ENCODE measurements at regions of chr7 and their contacts with region 1.

Region 1: DNA sequence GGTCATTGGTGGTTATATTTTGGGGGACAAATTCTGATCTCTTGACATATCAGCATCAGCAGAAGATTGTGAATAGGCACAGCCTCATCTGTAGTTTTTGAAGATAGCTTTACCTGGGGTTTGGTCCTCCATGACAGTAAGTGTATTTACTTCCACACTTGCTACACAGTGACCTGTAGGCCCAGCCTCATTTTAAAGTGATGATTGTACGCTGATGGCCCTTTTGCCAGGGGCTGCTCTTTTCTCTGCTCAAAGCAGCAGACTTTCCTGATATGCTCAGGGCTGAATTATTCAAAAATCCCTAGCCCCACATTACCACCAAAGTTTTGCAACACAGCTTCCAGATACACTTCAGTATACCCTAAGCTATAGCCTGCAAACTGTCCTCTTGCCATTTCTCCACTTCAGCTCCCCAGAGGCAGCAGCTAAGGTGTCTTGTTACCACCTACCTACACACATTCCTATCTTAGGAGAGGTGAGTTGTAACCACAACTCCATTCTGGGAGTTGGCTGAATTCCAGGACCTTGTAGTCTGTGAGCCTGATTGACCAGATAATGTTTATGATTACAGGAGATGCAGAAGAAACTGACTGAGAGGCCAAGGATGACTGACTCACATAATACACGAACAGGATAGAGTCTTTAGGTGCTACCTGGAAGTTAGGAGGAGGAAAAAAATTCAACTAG is 6.0 kb downstream of the ASB4 start:
- DNase-seq: peak; percentile 94
- ATAC-seq: peak; percentile 95
- H3K4me3 ChIP-seq: peak overlapping the region in 1 of 2 experiments; percentile 27; a peak in 3 of 4 replicates
- H3K27ac ChIP-seq: peak overlapping the region; percentile 15; the same call in 1 of the 2 replicates
- H3K4me1 ChIP-seq: peaks cover 20 to 30% of the 10 kb centered on the region in 2 experiments
- H3K27me3 ChIP-seq: no peaks in the 10 kb centered on the region
- CTCF ChIP-seq: no peak
- POLR2A ChIP-seq: no peak
- RAD21 ChIP-seq: no peak

Region 2: GRCh38 chr7:95476904-95477594 is 14.7 kb before region 1 on chr7:
- CTCF ChIA-PET with region 1: interaction called, 19 read pairs
- POLR2A ChIA-PET with region 1: no interaction called
- RAD21 ChIA-PET with region 1: no interaction called
- intact Hi-C with region 1: no loop called
- DNase-seq: peak; percentile 62
- ATAC-seq: peak; percentile 72
- H3K4me3 ChIP-seq: no peak overlapping the region
- H3K27ac ChIP-seq: no peak overlapping the region
- H3K4me1 ChIP-seq: peaks cover 0 to 6% of the 10 kb centered on the region in 2 experiments; a peak in 1 of 4 replicates
- H3K27me3 ChIP-seq: no peaks in the 10 kb centered on the region
- CTCF ChIP-seq: peak; percentile 58 to 80 (median 62); a peak in 5 of 6 replicates
- POLR2A ChIP-seq: no peak
- RAD21 ChIP-seq: peak; percentile 82